ENCODE measurements at regions of chr5 and their contacts with region 1.

Region 1: DNA sequence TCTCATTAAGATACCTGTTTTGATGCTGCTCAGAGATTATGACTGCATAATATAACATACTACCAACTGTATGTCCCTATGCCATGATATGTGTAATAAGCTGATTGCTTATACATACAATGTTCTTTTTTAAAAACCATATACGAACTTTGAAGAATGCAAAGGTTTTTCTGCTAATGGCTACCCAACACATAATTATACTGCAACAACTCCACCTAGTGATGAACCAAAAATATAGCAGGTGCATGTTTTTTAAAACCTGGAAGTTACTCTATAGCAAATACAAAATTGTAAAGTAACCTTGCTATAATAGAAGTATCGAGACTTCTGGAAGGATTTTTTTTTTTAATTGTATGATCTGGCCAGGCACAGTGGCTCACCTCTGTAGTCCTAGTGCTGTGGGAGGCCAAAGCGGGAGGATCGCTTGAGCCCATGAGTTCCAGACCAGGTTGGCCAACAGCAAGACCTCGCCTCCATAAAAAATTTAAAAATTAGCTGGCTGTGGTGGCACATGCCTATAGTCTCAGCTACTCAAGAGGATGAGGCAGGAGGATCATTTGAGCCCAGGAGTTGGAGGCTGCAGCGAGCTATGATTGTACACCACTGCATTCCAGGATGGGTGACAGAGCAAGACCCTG is 49.1 kb downstream of the HOMER1 start:
- DNase-seq: no peak
- H3K4me3 ChIP-seq: no peak overlapping the region
- CTCF ChIP-seq: peak; percentile 15

Region 2: DNA sequence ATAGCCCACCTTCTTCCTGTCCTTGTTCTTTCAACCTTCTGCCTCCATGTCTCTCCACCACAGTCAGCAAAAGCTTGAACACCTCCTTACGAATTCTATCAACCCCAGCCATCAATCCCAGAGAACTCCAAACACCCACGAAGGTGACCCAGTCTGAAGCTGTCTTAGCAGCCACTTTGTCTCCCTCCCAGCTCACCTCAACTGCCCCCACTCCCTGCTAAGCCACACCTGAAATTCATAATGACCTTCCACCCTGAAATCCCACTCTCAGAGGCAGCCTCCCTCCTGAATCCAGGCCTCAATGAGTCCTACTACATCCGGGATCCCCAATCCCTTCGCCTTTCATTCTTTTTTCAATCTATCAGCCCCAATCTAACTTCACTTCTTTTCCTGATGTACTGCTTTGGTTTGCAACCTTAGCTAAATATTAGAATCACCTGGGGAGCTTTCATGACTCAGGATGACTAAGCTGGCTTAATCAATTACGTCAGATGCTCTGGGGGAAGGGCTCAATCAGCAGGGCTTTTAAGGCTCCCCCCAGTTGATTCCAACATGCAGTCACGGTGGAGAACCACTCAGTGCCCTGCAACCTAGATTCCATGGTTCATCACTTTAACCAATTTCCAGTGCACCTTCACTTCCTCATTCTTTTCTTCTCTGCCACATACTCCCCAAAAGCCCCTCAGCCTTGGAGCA is 321.0 kb before region 1 on chr5:
- CTCF ChIA-PET with region 1: interaction called, 13 read pairs
- POLR2A ChIA-PET with region 1: no interaction called
- DNase-seq: no peak
- H3K4me3 ChIP-seq: no peak overlapping the region
- CTCF ChIP-seq: no peak

Region 3: DNA sequence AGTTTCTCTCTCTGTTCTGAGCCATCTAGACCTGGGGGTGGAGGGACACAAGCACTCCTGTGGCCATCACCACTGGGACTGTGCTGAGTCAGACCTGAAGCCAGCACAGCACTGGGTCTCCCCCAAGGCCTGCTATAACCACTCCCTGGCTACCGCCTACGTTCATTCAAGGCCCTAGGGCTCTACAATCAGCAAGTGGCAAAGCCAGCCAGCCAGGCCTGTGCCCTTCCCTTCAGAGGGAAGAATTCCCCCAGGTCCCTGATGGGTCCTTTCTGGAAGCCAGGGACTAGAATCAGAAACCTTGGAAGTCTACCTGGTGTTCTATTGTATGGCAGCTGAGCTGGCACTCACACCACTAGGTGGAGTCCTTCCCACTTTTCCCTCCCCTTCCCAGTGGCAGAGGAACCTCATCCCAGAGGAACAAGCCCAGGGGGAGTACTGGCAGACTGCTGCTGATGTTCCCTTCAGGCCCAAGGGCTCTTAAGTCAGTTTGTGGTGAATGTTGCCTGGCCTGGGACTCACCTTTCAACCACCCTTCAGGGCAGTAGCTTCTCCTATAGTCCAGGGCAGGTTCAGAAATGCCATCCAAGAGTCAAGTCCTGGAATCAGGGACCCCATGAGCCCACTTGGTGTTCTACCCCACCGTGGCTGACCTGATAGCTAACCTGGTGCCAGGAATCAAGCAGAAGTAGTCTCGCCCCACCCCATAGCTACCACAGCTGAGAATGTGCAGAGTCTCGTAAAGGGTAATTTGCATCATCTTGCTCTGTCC is 208.8 kb before region 1 on chr5:
- CTCF ChIA-PET with region 1: interaction called, 77 read pairs
- POLR2A ChIA-PET with region 1: no interaction called
- DNase-seq: no peak
- H3K4me3 ChIP-seq: no peak overlapping the region
- CTCF ChIP-seq: peak; percentile 78

Region 4: GRCh38 chr5:79454043-79454442 is 10.8 kb before region 1 on chr5:
- CTCF ChIA-PET with region 1: interaction called, 25 read pairs
- POLR2A ChIA-PET with region 1: no interaction called
- DNase-seq: no peak
- H3K4me3 ChIP-seq: no peak overlapping the region
- CTCF ChIP-seq: no peak

Region 5: DNA sequence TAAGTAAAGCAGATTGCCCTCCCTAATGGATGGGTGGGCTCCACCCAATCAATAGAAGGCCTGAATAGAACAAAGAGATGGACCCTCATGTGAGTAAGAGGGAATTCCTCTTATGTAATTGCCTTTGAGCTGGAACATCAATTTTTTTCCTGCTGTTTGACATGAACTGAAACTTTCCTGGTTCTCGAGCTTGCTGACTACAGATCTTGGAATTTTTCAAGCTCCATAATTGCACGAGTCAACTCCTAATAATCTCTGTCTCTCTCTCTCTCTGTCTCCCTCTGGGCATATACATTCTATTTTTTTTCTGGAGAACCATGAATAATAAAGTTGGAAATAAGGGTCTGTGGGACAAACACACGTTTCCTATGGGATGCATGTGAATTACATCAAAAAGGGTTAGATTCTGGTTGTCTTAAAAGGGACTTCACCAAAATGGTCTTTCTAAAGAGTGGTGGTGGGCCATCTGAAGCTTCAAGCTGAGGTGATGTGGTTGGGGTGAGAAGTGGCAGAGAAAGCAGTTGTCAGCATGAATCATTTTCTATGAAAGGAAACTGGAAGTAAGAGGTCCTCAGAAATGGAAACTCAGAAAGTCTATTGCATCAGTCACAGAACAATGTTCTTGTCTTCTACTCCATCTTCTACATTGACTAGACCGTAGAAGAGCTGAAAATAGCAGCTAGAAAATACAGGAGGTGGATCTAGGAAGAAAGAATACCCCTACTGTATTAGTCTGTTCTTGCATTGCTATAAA is 96.1 kb after region 1 on chr5:
- CTCF ChIA-PET with region 1: no interaction called
- POLR2A ChIA-PET with region 1: no interaction called
- DNase-seq: peak; percentile 53
- H3K4me3 ChIP-seq: no peak overlapping the region
- CTCF ChIP-seq: no peak

Measured in AG04449 (cell line).